CD4-positive, alpha-beta memory T cell (primary cell): ENCODE measurements at regions of chr14 and their contacts with region 1.

Region 1: DNA sequence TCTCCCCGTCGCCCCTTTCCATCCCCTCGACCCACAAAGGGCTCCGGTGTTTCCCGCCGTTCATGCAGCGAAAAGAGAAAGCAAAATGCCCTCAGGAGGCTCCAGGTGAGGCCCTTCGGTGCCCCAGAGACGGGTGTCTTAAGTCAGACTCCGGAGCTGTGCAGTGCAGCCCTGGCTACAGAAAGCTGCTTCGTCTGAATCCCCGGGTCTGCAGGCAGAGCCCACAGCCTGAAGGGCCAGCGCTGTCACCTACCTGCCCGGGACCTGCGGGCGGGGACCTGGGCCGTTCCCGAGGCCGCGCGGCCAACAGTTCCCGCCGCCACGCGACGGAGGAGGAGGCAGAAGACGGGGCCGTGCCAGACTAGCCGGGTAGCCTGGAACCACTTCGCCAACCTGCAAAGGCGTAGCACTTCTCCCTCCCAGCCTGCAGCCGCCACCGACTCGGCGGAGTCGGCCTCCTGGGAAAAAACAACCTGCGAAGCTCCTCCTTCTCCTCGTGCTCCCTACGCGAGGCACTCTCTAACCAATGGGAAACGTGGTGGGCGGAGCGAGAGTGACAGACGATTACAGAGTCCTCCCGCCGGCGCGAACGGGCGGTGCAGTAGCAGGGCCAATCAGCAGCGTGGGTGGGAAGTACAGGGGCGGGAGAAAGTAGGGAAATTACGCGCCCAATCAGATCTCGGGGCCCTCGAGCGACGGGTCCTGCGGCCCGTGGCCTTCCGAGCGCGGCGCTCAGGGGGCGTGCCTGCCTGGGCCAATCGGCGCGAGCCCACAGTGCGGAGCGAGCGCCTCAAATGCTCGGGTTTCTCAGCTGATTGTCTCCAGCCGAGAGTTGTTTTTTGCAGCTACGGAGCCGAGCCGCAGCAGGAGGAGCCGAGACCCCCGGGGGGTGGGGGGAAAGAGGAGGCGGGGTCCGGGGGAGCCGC is at the starts of genes GPR137C and TXNDC16:
- DNase-seq: peak; percentile 97 to 100 (median 99)
- H3K4me3 ChIP-seq: peak within 1 kb of the TSS; percentile 67 to 90
- H3K4me3 Mint-ChIP-seq: peak within 1 kb of the TSS; percentile 92 to 99 (median 96)
- H3K27ac ChIP-seq: peak within 1 kb of the TSS; percentile 87
- H3K27ac Mint-ChIP-seq: peak within 1 kb of the TSS; percentile 91 to 99 (median 95)
- H3K4me1 ChIP-seq: peaks cover 23% of the 10 kb centered on the region
- H3K4me1 Mint-ChIP-seq: peaks cover 19 to 39% (median 29%) of the 10 kb centered on the region in 4 donors
- H3K27me3 ChIP-seq: no peaks in the 10 kb centered on the region
- H3K27me3 Mint-ChIP-seq: no peaks in the 10 kb centered on the region
- total RNA-seq, gene GPR137C: 0.20 TPM in 1 of 2 experiments, not detected in the other
- total RNA-seq, gene TXNDC16: 7.0 to 7.6 TPM

Region 2: DNA sequence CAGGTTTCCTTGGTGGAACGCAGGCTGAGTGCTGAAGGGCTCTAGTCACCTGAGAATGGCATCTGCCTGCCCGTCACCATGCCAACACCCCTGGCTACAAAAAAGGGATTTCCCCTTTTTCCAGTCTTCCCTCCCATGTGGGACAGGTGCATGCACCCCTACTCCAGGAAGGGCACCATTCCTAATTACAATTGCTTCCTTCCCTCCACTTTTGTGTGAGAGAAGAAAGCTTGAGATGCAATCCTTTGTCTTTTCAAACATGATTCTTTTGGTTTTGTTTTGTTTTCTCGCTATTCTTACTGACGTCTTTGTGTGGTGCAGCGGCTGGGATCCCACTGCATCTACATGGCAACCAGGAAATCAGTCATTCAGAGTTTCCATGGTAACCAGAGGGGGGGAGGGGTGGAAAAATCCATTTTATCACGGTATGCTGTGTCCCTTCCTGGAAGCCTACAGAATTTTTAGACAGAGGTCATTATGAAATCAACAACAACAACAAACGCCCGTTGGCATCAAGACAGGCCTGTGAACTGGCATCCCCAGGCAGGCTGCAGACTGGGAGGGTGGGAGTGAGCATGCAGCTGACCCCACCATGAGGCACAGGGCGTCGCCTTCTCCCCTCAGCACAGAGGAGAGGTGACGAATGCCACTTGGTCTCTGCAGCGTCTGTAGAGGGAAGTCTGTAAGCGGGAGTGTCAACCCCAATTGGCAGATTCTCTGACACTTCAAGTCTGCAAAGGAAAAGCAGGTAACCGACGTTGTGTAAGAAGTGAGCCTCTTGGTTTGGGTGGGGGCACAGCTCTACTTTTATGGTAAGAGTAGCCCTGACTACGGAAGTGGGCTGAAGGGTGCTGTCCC is 705.5 kb before region 1 on chr14:
- CTCF ChIA-PET with region 1: no interaction called
- POLR2A ChIA-PET with region 1: no interaction called
- intact Hi-C with region 1: loop called (anchors 5 kb)
- DNase-seq: peak; percentile 92 to 99 (median 96)
- H3K4me3 ChIP-seq: peak overlapping the region; percentile 14 to 72
- H3K4me3 Mint-ChIP-seq: peak overlapping the region; percentile 85 to 98 (median 91)
- H3K27ac ChIP-seq: peak overlapping the region; percentile 92
- H3K27ac Mint-ChIP-seq: peak overlapping the region; percentile 98 to 100 (median 99)
- H3K4me1 ChIP-seq: peaks cover 51% of the 10 kb centered on the region
- H3K4me1 Mint-ChIP-seq: peaks cover 46 to 73% (median 52%) of the 10 kb centered on the region in 4 donors
- H3K27me3 ChIP-seq: no peaks in the 10 kb centered on the region
- H3K27me3 Mint-ChIP-seq: peaks cover 2% of the 10 kb centered on the region in 2 donors

Region 3: DNA sequence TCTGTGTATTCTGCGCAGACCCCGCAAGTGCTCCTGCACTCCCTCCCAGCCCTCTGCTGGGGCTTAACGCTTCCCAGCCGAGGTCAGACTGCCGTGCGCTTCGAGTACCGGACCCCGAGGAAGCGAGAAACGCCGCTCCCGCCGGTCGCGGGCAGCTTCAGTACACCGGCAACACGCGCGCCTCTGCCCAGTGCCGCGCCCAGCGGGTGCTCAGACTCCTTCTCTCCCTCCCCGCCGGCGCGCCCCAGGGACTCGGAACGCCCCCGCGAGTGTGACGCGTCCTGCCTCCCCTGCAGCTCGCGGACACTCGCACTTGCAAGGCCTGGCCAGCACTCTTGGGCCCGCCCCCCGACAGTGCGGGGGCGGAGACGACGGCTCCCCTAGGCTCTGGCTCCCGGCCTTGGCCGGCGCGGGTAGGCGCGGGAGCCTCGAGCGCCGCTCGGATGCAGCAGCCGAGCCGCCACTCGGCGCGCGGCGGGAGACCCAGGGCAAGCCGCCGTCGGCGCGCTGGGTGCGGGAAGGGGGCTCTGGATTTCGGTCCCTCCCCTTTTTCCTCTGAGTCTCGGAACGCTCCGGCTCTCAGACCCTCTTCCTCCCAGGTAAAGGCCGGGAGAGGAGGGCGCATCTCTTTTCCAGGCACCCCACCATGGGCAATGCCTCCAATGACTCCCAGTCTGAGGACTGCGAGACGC is 238.3 kb before region 1 on chr14 and contains the start of gene PTGER2:
- CTCF ChIA-PET with region 1: interaction called, 3 read pairs
- POLR2A ChIA-PET with region 1: interaction called, 11 read pairs
- intact Hi-C with region 1: loop called (anchors 2 kb)
- DNase-seq: peak; percentile 64 to 83 (median 74)
- H3K4me3 ChIP-seq: peak within 1 kb of the TSS; percentile 83 to 86
- H3K4me3 Mint-ChIP-seq: peak within 1 kb of the TSS; percentile 95 to 100 (median 99)
- H3K27ac ChIP-seq: peak within 1 kb of the TSS; percentile 59
- H3K27ac Mint-ChIP-seq: peak within 1 kb of the TSS; percentile 87 to 97 (median 92)
- H3K4me1 ChIP-seq: peaks cover 70% of the 10 kb centered on the region
- H3K4me1 Mint-ChIP-seq: peaks cover 45 to 90% (median 63%) of the 10 kb centered on the region in 4 donors
- H3K27me3 ChIP-seq: no peaks in the 10 kb centered on the region
- H3K27me3 Mint-ChIP-seq: peaks cover 0 to 2% of the 10 kb centered on the region in 2 donors
- total RNA-seq, gene PTGER2: 29.4 to 30.2 TPM

Region 4: GRCh38 chr14:52494444-52494843 is 57.9 kb before region 1 on chr14:
- CTCF ChIA-PET with region 1: no interaction called
- POLR2A ChIA-PET with region 1: no interaction called
- intact Hi-C with region 1: no loop called
- DNase-seq: no peak
- H3K4me3 ChIP-seq: no peak overlapping the region
- H3K4me3 Mint-ChIP-seq: no peak overlapping the region
- H3K27ac ChIP-seq: no peak overlapping the region
- H3K27ac Mint-ChIP-seq: no peak overlapping the region
- H3K4me1 ChIP-seq: no peaks in the 10 kb centered on the region
- H3K4me1 Mint-ChIP-seq: no peaks in the 10 kb centered on the region
- H3K27me3 ChIP-seq: no peaks in the 10 kb centered on the region
- H3K27me3 Mint-ChIP-seq: no peaks in the 10 kb centered on the region

Region 5: GRCh38 chr14:52514046-52514811 is 38.1 kb before region 1 on chr14:
- CTCF ChIA-PET with region 1: no interaction called
- POLR2A ChIA-PET with region 1: no interaction called
- intact Hi-C with region 1: no loop called
- DNase-seq: no peak
- H3K4me3 ChIP-seq: no peak overlapping the region
- H3K4me3 Mint-ChIP-seq: no peak overlapping the region
- H3K27ac ChIP-seq: no peak overlapping the region
- H3K27ac Mint-ChIP-seq: no peak overlapping the region
- H3K4me1 ChIP-seq: no peaks in the 10 kb centered on the region
- H3K4me1 Mint-ChIP-seq: no peaks in the 10 kb centered on the region
- H3K27me3 ChIP-seq: no peaks in the 10 kb centered on the region
- H3K27me3 Mint-ChIP-seq: no peaks in the 10 kb centered on the region

Region 6: GRCh38 chr14:52575858-52576257 is 23.5 kb after region 1 on chr14:
- CTCF ChIA-PET with region 1: no interaction called
- POLR2A ChIA-PET with region 1: no interaction called
- intact Hi-C with region 1: no loop called
- DNase-seq: no peak
- H3K4me3 ChIP-seq: no peak overlapping the region
- H3K4me3 Mint-ChIP-seq: no peak overlapping the region
- H3K27ac ChIP-seq: no peak overlapping the region
- H3K27ac Mint-ChIP-seq: no peak overlapping the region
- H3K4me1 ChIP-seq: no peaks in the 10 kb centered on the region
- H3K4me1 Mint-ChIP-seq: no peaks in the 10 kb centered on the region
- H3K27me3 ChIP-seq: no peaks in the 10 kb centered on the region
- H3K27me3 Mint-ChIP-seq: peaks cover 5% of the 10 kb centered on the region in 2 donors

Region 7: DNA sequence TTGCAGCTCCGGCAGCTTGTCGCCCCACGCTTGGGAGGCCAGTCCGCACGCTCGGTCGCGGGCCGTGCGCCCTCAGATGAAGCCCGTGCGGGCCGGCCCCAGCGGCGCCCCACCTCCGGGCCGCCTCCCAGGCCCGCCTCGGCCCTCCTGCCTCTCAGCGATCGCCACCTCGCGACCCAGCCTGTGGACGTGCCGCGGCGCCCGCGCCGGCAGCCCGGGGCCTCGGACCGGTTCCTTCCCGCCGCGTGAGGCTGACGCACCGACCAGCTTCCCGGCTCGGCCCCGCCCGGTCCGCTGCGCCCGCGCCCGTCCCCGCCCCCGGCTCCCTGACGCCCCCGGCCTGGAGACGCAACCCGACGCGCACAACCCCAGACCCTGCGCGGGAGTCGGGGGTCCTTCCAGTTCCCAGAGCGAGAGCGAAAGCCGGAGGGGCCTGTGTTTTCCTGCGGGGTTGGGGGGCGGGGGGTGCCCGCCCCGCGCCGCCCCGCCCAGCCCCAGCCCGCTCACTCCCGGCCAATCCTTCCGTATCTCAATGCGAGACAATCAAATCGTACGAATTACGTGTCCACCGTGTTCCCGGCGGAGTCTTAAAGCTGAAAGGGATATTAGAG is 143.3 kb after region 1 on chr14 and contains the start of gene ERO1A:
- CTCF ChIA-PET with region 1: interaction called, 3 read pairs
- POLR2A ChIA-PET with region 1: interaction called, 17 read pairs
- intact Hi-C with region 1: loop called (anchors 1 kb)
- DNase-seq: peak; percentile 56 to 71 (median 60)
- H3K4me3 ChIP-seq: peak within 1 kb of the TSS; percentile 96 to 99
- H3K4me3 Mint-ChIP-seq: peak within 1 kb of the TSS; percentile 98 to 100 (median 99)
- H3K27ac ChIP-seq: peak within 1 kb of the TSS; percentile 81
- H3K27ac Mint-ChIP-seq: peak within 1 kb of the TSS; percentile 88 to 99 (median 98)
- H3K4me1 ChIP-seq: peaks cover 39% of the 10 kb centered on the region
- H3K4me1 Mint-ChIP-seq: peaks cover 26 to 47% (median 40%) of the 10 kb centered on the region in 4 donors
- H3K27me3 ChIP-seq: no peaks in the 10 kb centered on the region
- H3K27me3 Mint-ChIP-seq: no peaks in the 10 kb centered on the region
- total RNA-seq, gene ERO1A: 93.8 to 98.3 TPM

Region 8: GRCh38 chr14:52776816-52777215 is 224.5 kb after region 1 on chr14:
- CTCF ChIA-PET with region 1: no interaction called
- POLR2A ChIA-PET with region 1: no interaction called
- intact Hi-C with region 1: loop called (anchors 2 kb)
- DNase-seq: peak in 1 of 5 donors; percentile 12
- H3K4me3 ChIP-seq: no peak overlapping the region
- H3K4me3 Mint-ChIP-seq: no peak overlapping the region
- H3K27ac ChIP-seq: no peak overlapping the region
- H3K27ac Mint-ChIP-seq: peak overlapping the region in 2 of 7 donors; percentile 10 to 15
- H3K4me1 ChIP-seq: no peaks in the 10 kb centered on the region
- H3K4me1 Mint-ChIP-seq: peaks cover 0 to 5% (median 2%) of the 10 kb centered on the region in 4 donors
- H3K27me3 ChIP-seq: no peaks in the 10 kb centered on the region
- H3K27me3 Mint-ChIP-seq: no peaks in the 10 kb centered on the region

Region 9: DNA sequence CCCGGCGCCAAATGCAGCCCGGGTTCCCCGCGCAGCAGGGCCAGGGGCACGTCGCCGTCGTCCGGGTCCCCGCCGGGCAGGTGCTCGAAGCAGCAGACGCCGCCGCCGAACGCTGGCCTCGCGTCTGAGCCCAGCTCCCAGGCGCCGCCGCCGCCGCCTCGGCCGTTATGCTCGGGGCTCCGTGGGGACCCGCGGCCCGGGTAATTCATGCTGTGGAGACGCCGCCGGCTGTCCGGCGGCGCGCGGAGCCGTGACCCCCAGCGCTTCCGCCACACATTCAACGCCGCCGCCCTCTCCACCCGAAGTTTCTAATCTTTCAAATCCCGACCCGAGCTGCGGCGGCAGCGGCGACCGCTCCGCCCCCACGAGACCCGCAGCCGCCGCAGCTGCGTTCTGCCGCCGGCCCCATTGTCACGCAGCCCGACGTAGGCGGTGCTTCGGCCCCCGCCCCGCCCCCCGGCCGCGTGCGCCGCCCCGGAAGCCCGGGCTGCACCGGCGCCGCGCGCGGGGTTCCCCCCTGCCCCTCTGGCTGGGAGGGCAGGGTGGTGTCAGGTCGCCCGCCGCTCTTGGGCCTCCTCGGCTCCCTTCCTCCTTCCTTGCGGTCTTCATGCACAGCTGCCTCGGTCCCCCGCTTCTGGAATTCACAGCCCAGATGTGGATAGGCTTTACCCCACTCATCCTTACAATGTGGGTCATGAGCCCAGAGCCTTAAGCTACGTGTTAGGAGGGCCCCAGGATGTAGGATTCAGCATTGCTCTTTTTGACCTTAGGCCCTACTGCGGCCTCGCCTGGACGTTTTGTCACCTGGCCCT is 600.8 kb after region 1 on chr14 and contains the start of gene DDHD1:
- CTCF ChIA-PET with region 1: no interaction called
- POLR2A ChIA-PET with region 1: interaction called, 12 read pairs
- intact Hi-C with region 1: loop called (anchors 2 kb)
- DNase-seq: peak; percentile 84 to 89 (median 87)
- H3K4me3 ChIP-seq: peak within 1 kb of the TSS; percentile 87 to 90
- H3K4me3 Mint-ChIP-seq: peak within 1 kb of the TSS; percentile 95 to 100 (median 99)
- H3K27ac ChIP-seq: peak within 1 kb of the TSS; percentile 87
- H3K27ac Mint-ChIP-seq: peak within 1 kb of the TSS; percentile 98 to 99 (median 99)
- H3K4me1 ChIP-seq: peaks cover 46% of the 10 kb centered on the region
- H3K4me1 Mint-ChIP-seq: peaks cover 36 to 58% (median 45%) of the 10 kb centered on the region in 4 donors
- H3K27me3 ChIP-seq: no peaks in the 10 kb centered on the region
- H3K27me3 Mint-ChIP-seq: no peaks in the 10 kb centered on the region
- total RNA-seq, gene DDHD1: 47.0 to 53.5 TPM